ENCODE measurements at regions of chr3 and their contacts with region 1.

Region 1: GRCh38 chr3:58630076-58630709 is 36.4 kb downstream of the FAM3D start:
- DNase-seq: no peak
- H3K4me3 ChIP-seq: no peak overlapping the region
- H3K27ac ChIP-seq: peak overlapping the region in 7 of 8 donors; percentile 3 to 87 (median 78)
- H3K4me1 ChIP-seq: peaks cover 3 to 53% (median 31%) of the 10 kb centered on the region in 6 donors
- H3K27me3 ChIP-seq: peaks cover 0 to 11% (median 0%) of the 10 kb centered on the region in 7 donors
- CTCF ChIP-seq: peak; percentile 69 to 95 (median 90)
- POLR2A ChIP-seq: no peak

Region 2: GRCh38 chr3:58317811-58318210 is 312.4 kb before region 1 on chr3:
- intact Hi-C with region 1: loop called (anchors 10 kb)
- DNase-seq: no peak
- H3K4me3 ChIP-seq: no peak overlapping the region
- H3K27ac ChIP-seq: peak overlapping the region in 4 of 8 donors; percentile 24 to 51 (median 25)
- H3K4me1 ChIP-seq: peaks cover 0 to 36% (median 14%) of the 10 kb centered on the region in 6 donors
- H3K27me3 ChIP-seq: no peaks in the 10 kb centered on the region
- CTCF ChIP-seq: no peak
- POLR2A ChIP-seq: no peak

Region 3: DNA sequence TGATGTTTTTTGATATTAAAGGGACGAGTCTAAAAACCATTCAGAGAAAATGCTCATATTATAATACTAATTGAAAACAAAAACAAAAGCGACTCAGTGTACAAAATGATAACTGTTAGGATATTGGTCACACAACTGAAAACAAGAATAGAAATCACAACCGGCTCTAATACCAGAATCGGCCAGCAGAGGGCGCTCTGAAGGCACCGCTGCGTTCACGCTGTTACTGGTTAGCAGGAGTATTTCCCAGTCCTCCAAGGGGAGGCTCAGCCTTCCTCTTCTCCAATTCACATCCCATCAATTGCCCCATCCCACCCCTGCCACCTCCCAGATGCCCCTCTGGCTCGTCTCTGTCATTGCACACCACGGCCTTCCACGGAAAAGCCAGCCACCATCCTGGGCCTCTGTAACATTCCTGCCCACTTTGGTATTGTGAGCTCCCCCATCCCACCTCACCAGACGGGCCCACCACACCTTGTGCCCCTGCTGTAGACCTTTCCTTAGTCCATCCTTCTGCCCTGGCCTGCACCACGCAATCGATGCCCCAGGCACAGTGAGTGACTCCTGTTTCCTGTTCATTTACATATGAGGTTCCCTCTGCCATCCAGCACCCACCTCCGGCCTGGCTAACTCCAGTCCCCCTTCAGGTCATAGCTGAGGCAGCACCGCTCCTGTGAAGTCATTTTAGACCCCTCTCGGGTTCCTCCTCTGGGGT is 61.5 kb before region 1 on chr3:
- intact Hi-C with region 1: loop called (anchors 2 kb)
- DNase-seq: peak; percentile 90
- H3K4me3 ChIP-seq: peak overlapping the region in 1 of 8 donors; percentile 38
- H3K27ac ChIP-seq: no peak overlapping the region
- H3K4me1 ChIP-seq: peaks cover 5 to 27% (median 11%) of the 10 kb centered on the region in 6 donors
- H3K27me3 ChIP-seq: no peaks in the 10 kb centered on the region
- CTCF ChIP-seq: peak; percentile 54 to 89 (median 81)
- POLR2A ChIP-seq: no peak

Measured in spleen (tissue), 13 donors.